HCT116 (cell line): ENCODE measurements at regions of chr17 and their contacts with region 1.

Region 1: DNA sequence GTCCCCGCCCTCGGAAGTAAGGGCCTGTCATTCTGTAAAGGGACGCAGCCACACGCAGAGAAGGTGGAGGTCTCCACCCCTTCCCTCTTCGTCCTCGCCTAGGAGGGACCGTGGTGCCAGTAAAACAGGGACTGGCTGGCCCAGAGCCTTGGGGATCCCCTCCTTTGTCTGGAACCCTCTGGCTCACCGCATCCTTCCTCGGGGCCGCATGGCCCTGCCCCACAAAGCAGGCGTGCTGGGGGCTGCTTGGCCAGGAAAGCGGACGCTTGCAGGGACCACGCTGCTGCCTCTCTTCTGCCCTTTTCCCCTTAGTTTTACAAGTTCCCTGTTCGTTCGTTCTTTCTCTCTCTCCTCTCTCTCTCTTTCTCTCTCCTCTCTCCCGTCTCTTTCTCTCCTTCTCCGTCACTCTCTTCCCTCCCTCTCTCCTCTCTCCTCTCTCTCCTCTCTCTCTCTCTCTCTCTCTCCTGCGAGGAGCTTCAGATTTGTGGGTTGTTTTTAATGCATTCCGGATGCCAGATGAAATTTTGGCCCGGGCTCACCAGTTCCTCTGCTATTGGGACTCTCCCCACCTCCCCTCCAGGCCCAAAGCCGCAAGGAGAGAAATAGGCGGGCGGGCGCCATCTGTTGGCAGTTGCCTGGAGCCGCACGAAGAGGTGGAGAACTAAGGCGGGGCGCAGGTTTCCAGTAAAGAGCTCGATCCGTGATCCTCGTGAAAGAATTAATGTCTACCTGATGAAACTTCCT is 35.1 kb upstream of the CDRT4 start:
- DNase-seq: peak; percentile 33
- ATAC-seq: peak; percentile 95
- H3K4me3 ChIP-seq: no peak overlapping the region
- H3K27ac ChIP-seq: no peak overlapping the region
- H3K4me1 ChIP-seq: peaks cover 3 to 5% of the 10 kb centered on the region in 2 experiments; a peak in 3 of 4 replicates
- H3K27me3 ChIP-seq: no peaks in the 10 kb centered on the region
- CTCF ChIP-seq: peak; percentile 80 to 94 (median 90)
- POLR2A ChIP-seq: no peak
- RAD21 ChIP-seq: peak; percentile 87

Region 2: DNA sequence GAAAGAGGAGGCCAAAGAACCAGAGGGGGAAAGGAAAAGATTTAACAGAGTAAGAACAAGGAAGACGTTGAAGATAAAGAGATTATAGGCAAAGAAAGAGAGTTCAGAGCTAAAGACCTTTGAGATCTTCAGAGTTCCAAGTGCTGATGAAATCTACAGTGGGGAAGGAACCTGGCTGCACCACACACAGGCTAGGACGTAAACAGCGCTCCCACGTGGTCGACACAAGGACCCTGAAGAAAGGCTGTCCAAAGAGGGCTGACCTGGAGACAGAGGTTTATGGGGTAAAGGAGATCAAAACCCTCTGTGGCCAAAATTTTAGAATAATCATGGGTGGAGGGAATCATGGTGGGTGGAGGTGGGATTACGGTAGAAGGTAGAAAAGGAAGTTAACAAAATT is 359.0 kb before region 1 on chr17:
- CTCF ChIA-PET with region 1: no interaction called
- POLR2A ChIA-PET with region 1: no interaction called
- RAD21 ChIA-PET with region 1: no interaction called
- intact Hi-C with region 1: no loop called
- DNase-seq: no peak
- ATAC-seq: no peak
- H3K4me3 ChIP-seq: no peak overlapping the region
- H3K27ac ChIP-seq: no peak overlapping the region
- H3K4me1 ChIP-seq: no peaks in the 10 kb centered on the region
- H3K27me3 ChIP-seq: peaks cover 7% of the 10 kb centered on the region; the same call in 1 of the 2 replicates
- CTCF ChIP-seq: no peak
- POLR2A ChIP-seq: no peak
- RAD21 ChIP-seq: no peak

Region 3: DNA sequence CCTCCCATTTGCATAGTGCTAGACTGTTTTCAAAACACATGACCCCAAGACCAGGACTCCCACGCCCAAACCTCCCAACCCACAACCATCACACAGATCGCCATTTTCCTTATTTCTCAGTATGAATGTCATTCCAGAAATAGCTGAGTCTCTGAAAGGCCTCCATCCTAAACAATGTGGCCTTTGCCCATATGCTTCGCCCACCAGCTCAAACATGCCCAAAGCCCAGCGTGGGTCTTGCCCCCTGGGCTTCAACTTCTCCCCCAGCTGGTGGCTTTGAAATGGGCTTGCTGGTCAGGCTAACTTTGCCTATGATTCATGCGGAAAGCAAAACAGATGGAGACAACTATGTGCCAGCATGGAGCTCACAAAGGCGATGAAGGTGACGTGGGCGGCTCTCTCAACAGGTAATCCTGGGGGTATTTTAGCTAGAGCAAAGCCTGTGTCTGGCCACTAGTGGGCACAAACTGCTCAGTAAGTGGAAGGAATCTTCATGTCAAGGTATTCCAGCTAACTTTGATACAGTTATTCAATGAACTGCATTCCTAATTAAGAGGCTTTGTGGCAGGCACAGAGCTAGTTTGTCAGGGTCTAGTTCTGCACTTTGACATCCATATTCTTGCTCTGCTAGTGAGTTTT is 254.5 kb before region 1 on chr17:
- CTCF ChIA-PET with region 1: interaction called, 12 read pairs
- POLR2A ChIA-PET with region 1: no interaction called
- RAD21 ChIA-PET with region 1: interaction called in 1 of 2 experiments, 6 read pairs
- intact Hi-C with region 1: no loop called
- DNase-seq: no peak
- ATAC-seq: peak; percentile 79
- H3K4me3 ChIP-seq: no peak overlapping the region
- H3K27ac ChIP-seq: no peak overlapping the region
- H3K4me1 ChIP-seq: no peaks in the 10 kb centered on the region
- H3K27me3 ChIP-seq: no peaks in the 10 kb centered on the region
- CTCF ChIP-seq: peak; percentile 20 to 64 (median 62); a peak in 4 of 6 replicates
- POLR2A ChIP-seq: no peak
- RAD21 ChIP-seq: peak; percentile 49

Region 4: DNA sequence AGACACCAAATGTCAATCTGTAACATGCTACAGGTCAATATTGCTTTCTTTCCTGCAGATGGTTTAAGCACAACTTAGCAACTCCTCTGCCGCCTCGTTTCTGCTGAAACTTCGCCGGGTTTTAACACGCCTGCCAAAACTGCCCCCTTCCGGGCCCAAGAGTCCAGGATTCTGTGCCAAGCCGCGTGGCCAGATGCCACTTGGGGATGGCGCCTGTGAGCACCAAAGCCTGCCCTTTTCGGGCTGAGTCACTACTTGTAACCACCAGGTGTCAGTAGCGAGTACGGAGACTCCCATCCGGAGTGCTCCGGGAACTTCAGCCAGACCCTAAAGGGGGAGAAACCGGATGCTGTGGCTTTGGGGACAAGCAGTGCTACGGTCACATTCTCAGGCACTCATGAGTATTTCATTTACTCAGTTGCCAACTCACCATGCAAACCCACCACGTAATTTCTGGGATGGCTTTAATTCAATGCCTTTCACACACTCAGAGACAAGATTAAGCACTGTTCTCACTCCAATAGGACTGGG is 245.2 kb before region 1 on chr17:
- CTCF ChIA-PET with region 1: interaction called, 77 read pairs
- POLR2A ChIA-PET with region 1: no interaction called
- RAD21 ChIA-PET with region 1: interaction called, 4 to 5 read pairs
- intact Hi-C with region 1: loop called (anchors 1 kb)
- DNase-seq: peak; percentile 59
- ATAC-seq: peak; percentile 68
- H3K4me3 ChIP-seq: no peak overlapping the region
- H3K27ac ChIP-seq: 0 out of 2 replicates have a peak overlapping the region, but pooled peaks have one; percentile 8
- H3K4me1 ChIP-seq: peaks cover 13 to 34% of the 10 kb centered on the region in 2 experiments; a peak in 3 of 4 replicates
- H3K27me3 ChIP-seq: no peaks in the 10 kb centered on the region
- CTCF ChIP-seq: peak; percentile 81 to 92 (median 91)
- POLR2A ChIP-seq: no peak
- RAD21 ChIP-seq: peak; percentile 56

Region 5: DNA sequence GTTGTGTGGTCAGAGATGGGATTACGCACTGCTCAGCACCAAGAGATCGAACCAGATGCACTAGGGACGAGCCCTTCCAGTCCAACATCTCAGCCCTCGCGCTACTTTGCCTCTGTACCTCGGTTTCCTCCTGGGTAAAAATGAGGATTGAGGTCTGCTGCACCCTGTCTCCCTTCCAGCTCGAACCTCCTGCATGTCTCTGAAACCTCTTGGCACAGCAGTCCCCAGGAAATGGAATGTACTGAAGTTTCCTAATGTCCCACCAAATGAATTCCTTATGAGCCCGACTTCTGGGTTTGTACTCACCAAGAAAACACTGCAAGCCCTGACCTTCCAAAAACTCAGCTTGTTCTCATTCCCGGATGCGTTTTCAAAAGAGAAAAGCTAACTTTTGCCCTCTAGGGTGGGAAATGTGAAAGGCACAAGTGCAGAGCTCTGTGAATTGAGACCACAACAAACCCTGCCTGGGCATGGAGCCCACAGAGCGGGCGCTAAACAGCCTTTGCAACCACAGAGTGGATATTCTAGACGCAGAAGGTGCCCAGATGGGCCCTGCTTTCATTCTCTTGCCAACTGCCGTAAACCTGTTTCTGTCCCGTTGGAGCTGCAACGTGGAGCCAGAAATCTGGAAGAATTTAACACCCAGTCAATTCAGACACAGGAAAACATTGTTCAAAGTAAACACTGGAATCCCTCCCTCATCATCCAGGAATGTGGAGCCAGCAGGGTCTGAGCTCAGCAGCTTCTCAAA is 45.4 kb before region 1 on chr17:
- CTCF ChIA-PET with region 1: no interaction called
- POLR2A ChIA-PET with region 1: no interaction called
- RAD21 ChIA-PET with region 1: no interaction called
- intact Hi-C with region 1: no loop called
- DNase-seq: no peak
- ATAC-seq: no peak
- H3K4me3 ChIP-seq: no peak overlapping the region
- H3K27ac ChIP-seq: no peak overlapping the region
- H3K4me1 ChIP-seq: no peaks in the 10 kb centered on the region
- H3K27me3 ChIP-seq: no peaks in the 10 kb centered on the region
- CTCF ChIP-seq: no peak
- POLR2A ChIP-seq: no peak
- RAD21 ChIP-seq: no peak

Region 6: DNA sequence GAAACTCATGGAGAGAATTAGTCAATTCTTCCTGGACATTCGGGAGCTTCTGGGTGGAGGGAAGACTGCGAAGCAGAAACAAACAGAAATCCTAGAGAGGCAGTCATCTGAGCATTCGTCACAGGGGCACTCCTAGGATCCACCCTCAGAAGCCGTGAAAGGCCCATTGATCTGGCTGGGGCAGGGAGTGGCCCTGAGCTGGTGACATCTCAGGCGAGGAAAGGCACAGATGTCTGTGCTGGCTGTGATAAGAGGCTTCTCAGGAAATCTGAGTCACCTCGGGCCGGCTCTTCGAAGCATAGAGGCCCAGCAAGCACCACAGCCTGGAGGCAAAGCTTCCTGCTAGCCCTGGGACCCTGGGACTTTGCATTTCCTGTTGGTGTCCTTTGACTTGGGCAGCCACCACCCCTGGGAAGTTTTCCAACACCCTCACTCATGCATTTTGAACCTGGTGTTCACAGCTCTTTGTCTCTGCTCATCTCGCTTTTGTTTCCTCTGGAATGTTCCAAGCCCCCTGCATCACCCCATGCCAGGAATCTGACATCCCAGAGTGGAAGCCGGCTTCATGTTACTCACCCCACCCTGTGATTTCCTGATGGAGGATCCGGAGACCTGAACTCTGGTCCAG is 11.8 kb before region 1 on chr17:
- CTCF ChIA-PET with region 1: interaction called, 24 read pairs
- POLR2A ChIA-PET with region 1: no interaction called
- RAD21 ChIA-PET with region 1: interaction called, 3 to 4 read pairs
- intact Hi-C with region 1: no loop called
- DNase-seq: peak; percentile 81
- ATAC-seq: peak; percentile 94
- H3K4me3 ChIP-seq: no peak overlapping the region
- H3K27ac ChIP-seq: peak overlapping the region; percentile 31; the same call in 1 of the 2 replicates
- H3K4me1 ChIP-seq: peaks cover 0 to 18% of the 10 kb centered on the region in 2 experiments; a peak in 3 of 4 replicates
- H3K27me3 ChIP-seq: no peaks in the 10 kb centered on the region
- CTCF ChIP-seq: no peak
- POLR2A ChIP-seq: no peak
- RAD21 ChIP-seq: no peak; the same call in 1 of the 2 replicates